Heart right ventricle (tissue), 16 donors: ENCODE measurements at regions of chr9 and their contacts with region 1.

Region 1: DNA sequence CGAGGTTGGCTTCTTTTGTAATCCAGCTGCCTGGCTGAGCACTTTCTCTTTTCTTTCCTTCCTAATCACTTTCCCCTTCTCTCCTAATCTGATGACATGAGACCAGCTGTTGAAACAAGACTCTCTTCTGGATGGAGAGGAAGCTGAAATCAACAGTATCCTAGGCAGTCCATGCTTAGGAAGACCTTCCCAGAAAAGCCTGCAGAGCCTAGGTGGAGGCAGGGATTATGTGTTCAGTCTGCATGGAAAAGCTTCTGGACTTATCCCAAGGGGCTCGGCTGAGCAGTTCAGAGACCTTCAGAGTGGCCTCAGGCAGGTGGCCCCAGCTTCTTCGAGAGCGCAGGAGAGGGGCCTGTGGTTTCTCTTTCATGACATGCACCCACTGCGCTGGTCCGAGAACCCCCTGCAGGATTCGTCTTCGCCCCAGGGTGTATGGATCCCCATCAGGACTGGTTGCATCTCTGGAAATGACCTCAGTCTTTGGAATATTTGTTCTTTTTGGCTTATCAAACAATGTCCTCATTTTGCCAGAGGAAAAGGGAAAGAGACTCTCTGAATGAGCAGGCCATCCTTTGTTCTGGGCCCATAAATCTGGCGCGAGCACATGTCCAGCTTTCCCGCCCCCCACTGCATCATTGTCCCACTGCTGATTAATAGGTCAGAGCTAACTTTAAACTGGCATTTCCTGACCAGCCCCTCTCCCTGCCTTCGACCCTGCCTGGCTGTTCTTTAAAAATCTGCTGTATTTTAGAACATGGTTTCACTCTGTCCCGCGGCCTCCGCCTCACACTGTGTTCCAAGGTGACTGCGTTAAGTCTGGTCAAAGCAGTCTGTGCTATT is 177.9 kb upstream of the KLF4 start:
- DNase-seq: peak; percentile 29 to 58
- ATAC-seq: peak; percentile 79 to 93 (median 90)
- H3K4me3 ChIP-seq: peak overlapping the region in 1 of 10 donors; percentile 0
- H3K27ac ChIP-seq: peak overlapping the region; percentile 37 to 86 (median 76)
- H3K4me1 ChIP-seq: peaks cover 0 to 20% (median 11%) of the 10 kb centered on the region in 9 donors
- H3K27me3 ChIP-seq: no peaks in the 10 kb centered on the region
- CTCF ChIP-seq: no peak

Region 2: DNA sequence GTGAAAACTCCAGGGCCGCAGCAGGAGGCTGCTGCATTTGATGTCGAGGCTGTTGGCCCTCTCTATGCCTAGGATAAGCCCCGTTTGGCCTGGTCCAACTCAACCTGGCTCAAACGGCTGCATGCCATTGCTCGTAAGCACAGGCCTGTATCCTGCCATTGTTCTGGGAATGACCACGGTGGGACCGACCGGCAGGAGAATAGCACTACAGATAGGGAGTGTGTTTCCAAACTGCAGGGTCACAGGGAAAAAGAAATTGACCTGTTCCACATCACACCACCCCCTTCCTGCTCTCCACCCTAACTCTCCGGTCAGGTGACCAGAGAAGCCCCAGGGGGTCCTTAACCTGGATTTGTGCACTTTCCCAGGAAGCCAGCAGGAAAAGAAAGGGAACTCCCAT is 100.8 kb after region 1 on chr9:
- intact Hi-C with region 1: loop called in 1 of 10 experiments (anchors 5 kb)
- DNase-seq: peak; percentile 31 to 76
- ATAC-seq: peak; percentile 92 to 97 (median 95)
- H3K4me3 ChIP-seq: no peak overlapping the region
- H3K27ac ChIP-seq: peak overlapping the region in 8 of 10 donors; percentile 46 to 80 (median 64)
- H3K4me1 ChIP-seq: peaks cover 0 to 24% (median 18%) of the 10 kb centered on the region in 9 donors
- H3K27me3 ChIP-seq: no peaks in the 10 kb centered on the region
- CTCF ChIP-seq: no peak

Region 3: GRCh38 chr9:107809871-107810460 is 142.5 kb after region 1 on chr9:
- intact Hi-C with region 1: loop called in 1 of 10 experiments (anchors 10 kb)
- DNase-seq: no peak
- ATAC-seq: no peak
- H3K4me3 ChIP-seq: no peak overlapping the region
- H3K27ac ChIP-seq: no peak overlapping the region
- H3K4me1 ChIP-seq: peaks cover 0 to 14% (median 0%) of the 10 kb centered on the region in 9 donors
- H3K27me3 ChIP-seq: no peaks in the 10 kb centered on the region
- CTCF ChIP-seq: no peak

Region 4: GRCh38 chr9:107874591-107875369 is 207.3 kb after region 1 on chr9:
- intact Hi-C with region 1: loop called in 1 of 10 experiments (anchors 10 kb)
- DNase-seq: no peak
- ATAC-seq: peak in 3 of 8 donors; percentile 51 to 74 (median 58)
- H3K4me3 ChIP-seq: no peak overlapping the region
- H3K27ac ChIP-seq: peak overlapping the region in 1 of 10 donors; percentile 41
- H3K4me1 ChIP-seq: peaks cover 0 to 21% (median 0%) of the 10 kb centered on the region in 9 donors
- H3K27me3 ChIP-seq: peaks cover 0 to 8% (median 0%) of the 10 kb centered on the region in 7 donors
- CTCF ChIP-seq: no peak